ENCODE measurements at regions of chr15 and their contacts with region 1.

Region 1: DNA sequence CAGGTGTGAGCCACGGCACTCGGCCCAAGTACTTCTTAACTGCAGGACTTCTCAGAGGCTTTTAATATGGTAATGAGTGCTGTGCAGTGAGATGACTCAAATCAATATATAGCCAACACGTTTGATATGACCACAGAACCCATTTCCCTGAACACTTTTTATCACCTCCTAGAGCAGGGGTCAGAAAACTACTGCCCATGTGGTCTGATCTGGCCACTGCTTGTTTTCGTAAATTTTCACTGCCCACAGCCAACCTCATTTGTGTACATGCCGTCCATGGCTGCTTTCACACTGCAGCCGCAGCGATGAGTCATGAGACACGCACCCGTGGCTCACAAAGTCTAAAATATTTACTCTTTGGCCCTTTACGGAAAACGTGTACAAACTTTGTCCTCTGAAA is 179.2 kb downstream of the RORA start:
- DNase-seq: no peak

Region 2: DNA sequence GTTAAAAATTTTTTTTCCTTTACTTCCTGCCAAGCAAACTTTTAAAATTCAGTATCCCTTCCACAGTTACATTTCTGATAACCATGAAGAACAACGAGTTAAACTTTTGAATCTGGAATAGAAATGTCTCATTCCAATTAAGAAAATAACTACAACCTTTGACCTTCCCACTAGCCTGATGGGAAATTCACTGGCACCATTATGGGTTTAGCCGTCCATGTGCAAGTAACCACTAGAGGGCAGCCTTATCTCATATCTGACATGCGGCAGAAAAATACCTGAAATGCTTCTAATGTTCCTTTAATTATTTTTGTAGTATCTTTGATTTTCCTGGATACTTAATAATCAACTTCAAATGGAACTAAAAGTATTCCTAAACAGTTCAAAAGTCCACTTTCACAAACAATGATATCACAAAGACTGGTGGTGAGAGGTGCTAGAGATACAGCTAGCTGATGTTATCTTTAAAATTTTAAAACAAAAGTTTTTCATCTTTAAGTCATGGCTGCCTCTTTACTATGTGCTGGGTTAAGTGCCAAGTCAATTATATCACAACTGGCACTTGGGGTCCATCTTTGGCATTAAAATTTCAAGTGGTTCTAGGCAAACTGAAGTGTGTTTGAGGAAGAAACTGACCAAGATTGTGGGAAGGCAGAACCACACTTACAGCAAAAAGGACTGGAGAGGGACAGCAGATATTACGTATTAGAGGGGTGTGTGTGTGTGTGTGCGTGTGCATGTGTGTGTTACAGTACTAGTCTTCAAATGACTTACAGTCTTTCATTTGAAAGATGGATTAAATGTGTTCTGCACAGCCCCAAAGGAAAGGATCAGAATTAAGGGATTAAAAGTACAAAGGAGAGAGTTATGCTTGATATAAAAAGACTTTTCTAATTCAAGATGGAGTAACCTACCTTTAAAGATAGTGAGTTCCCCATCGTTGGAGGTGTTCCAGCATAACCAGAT is 463.9 kb before region 1 on chr15:
- intact Hi-C with region 1: loop called (anchors 10 kb)
- DNase-seq: no peak

Region 3: GRCh38 chr15:60751985-60752952 is 297.7 kb before region 1 on chr15:
- intact Hi-C with region 1: loop called (anchors 10 kb)
- DNase-seq: no peak

Measured in cardiac septum (tissue), 1 donor.